Ovary (tissue), 10 donors: ENCODE measurements at regions of chr18 and their contacts with region 1.

Region 1: DNA sequence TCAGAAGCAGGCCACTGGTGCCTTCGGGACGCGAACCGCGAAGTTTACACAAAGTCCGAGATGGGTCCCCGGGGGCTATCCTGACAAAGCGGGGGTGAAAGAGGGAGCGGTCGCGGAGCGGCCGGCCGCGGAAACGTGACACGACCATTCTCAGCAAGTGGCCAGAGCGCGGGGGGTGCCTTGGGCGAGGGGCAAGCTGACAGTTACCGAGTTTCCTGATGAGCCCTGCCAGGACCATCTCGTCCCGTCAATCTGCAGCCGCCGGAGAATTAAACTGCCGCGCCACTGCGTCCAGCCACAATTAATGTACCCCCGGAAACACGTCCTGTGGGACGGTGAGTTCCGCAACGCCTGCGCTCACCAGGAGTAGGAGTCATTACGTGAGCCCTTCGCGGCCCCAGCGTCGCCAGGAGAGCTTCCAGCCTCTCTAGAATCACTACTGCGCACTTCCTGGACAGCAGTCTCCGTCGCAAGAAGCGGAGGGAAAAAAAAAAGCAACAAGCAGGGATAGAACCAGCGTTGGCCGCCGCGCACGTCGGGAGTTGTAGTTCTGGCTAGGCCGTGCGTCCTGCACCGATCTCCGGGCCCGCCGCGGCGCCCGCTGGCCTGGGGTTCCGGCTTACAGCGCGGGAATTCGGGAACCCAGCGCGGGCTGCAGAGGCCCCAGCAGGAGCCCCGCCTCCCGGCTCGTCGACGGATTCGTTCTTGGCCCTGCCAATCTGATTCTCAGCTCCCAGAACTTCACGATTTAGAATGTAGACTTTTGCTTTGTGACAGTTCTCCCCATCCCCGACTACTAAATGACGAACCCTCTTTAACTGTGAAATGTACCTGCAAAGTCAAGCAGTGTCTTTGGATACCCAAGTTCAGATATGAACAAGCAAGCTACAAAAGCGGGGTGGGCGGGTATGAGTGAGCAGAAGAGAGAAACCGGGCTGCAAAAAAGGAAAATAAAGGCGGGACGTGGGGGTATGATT is at the start of gene RTTN:
- DNase-seq: peak; percentile 91 to 96 (median 93)
- H3K4me3 ChIP-seq: peak within 1 kb of the TSS; percentile 82
- H3K27ac ChIP-seq: peak within 1 kb of the TSS; percentile 68 to 95
- H3K4me1 ChIP-seq: no peaks in the 10 kb centered on the region
- H3K27me3 ChIP-seq: no peaks in the 10 kb centered on the region
- CTCF ChIP-seq: no peak
- EP300 ChIP-seq: no peak
- POLR2A ChIP-seq: no peak
- total RNA-seq, gene RTTN: 14.1 to 22.4 (median 15.6) TPM

Region 2: DNA sequence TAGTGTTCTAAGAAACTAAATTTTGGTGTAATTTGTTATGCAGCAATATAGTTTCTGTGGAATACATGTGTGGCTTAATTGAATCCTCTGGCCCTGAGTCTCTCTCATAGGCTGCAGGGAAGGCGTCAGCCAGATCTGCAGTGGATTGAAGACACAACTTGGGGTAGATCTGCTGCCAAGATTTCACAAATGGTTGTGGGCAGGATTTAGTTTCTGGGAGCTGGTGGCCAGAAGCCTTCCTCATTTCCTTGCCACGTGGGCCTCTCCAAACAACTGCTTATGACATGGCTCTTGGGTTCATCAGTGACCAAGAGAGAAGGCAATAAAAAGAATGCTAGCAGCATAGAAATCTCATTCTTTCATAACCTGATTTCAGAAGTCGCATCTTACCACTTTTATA is 1379.6 kb before region 1 on chr18:
- intact Hi-C with region 1: no loop called
- DNase-seq: no peak
- H3K4me3 ChIP-seq: no peak overlapping the region
- H3K27ac ChIP-seq: no peak overlapping the region
- H3K4me1 ChIP-seq: no peaks in the 10 kb centered on the region
- H3K27me3 ChIP-seq: no peaks in the 10 kb centered on the region
- CTCF ChIP-seq: no peak
- EP300 ChIP-seq: no peak
- POLR2A ChIP-seq: no peak

Region 3: GRCh38 chr18:70288851-70289328 is 83.2 kb after region 1 on chr18 and contains the start of gene SOCS6:
- intact Hi-C with region 1: loop called in 1 of 4 experiments (anchors 5 kb)
- DNase-seq: peak; percentile 38 to 74 (median 58)
- H3K4me3 ChIP-seq: peak within 1 kb of the TSS; percentile 78
- H3K27ac ChIP-seq: peak within 1 kb of the TSS; percentile 90 to 96
- H3K4me1 ChIP-seq: peaks cover 12% of the 10 kb centered on the region
- H3K27me3 ChIP-seq: no peaks in the 10 kb centered on the region
- CTCF ChIP-seq: no peak
- EP300 ChIP-seq: no peak
- POLR2A ChIP-seq: no peak
- total RNA-seq, gene SOCS6: 9.8 to 23.8 (median 17.7) TPM

Region 4: GRCh38 chr18:70431203-70431624 is 225.5 kb after region 1 on chr18:
- intact Hi-C with region 1: loop called in 1 of 4 experiments (anchors 10 kb)
- DNase-seq: no peak
- H3K4me3 ChIP-seq: no peak overlapping the region
- H3K27ac ChIP-seq: no peak overlapping the region
- H3K4me1 ChIP-seq: no peaks in the 10 kb centered on the region
- H3K27me3 ChIP-seq: no peaks in the 10 kb centered on the region
- CTCF ChIP-seq: no peak
- EP300 ChIP-seq: no peak
- POLR2A ChIP-seq: no peak